Right cardiac atrium (tissue), 5 donors: ENCODE measurements at regions of chr12 and their contacts with region 1.

Region 1: DNA sequence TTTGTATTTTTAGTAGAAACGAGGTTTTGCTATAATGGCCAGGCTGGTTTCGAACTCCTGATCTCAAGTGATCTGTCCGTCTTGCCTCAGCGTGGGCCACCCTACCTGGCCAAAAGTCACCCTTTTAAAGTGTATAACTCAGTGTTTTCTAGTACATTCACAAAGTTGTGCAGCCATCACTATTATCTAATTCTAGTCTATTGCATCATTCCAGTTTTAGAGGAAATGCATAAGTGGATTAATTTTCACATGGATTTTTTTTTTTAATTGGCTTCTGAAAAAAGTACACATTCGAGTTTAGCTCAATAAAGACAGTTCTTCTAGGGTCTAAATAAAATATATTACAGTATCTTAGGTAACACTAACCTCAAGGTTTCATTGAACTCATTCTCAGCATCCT is 3.7 kb downstream of the DEPDC4 start:
- DNase-seq: no peak
- ATAC-seq: no peak
- H3K4me3 ChIP-seq: no peak overlapping the region
- H3K27ac ChIP-seq: no peak overlapping the region
- H3K4me1 ChIP-seq: no peaks in the 10 kb centered on the region
- H3K27me3 ChIP-seq: no peaks in the 10 kb centered on the region

Region 2: DNA sequence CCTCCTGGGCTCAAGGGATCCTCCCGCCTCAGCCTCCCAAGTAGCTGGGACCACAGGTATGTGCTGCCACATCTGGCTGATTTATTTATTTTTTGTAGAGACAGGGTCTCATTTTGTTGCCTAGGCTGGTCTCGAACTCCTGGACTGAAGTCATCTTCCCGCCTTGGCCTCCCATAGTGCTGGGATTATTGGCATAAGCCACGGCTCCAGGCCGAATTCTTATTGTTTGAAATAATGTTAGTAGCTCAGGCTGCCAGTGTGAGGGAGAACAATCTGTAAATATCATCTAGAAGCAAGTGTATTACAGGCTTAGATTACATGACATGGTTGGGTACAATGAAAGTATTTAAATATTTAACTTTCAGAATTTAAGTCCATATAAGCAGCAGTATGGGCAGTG is 54.3 kb before region 1 on chr12:
- intact Hi-C with region 1: loop called in 1 of 4 experiments (anchors 5 kb)
- DNase-seq: no peak
- ATAC-seq: no peak
- H3K4me3 ChIP-seq: no peak overlapping the region
- H3K27ac ChIP-seq: no peak overlapping the region
- H3K4me1 ChIP-seq: no peaks in the 10 kb centered on the region
- H3K27me3 ChIP-seq: no peaks in the 10 kb centered on the region

Region 3: DNA sequence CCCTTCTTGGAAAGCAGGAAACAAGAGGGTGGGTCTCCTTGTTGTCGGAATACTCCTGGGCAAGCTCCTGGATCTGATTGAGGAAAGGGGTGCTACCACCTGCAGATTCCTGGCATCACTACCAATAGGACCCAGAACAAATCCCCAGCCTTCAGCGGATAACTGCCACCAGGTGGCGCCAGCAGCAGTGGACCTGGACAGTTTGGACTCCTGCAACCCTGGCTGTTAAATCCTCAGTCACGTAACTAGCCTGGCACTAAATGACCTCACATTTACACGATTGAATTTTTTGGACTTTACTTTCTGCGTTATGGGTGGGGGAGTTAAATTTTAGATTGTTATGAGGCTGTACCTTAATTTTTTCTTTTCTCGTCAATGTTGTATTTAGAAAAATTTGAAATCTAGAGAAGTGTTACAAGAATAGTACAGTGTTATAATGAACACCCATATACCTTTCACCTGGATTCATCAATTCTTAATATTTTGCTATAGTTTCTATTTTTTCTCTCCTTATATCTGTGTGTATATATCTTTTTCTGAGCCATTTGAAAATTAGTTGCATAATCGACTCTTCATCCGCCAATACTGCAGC is 405.9 kb after region 1 on chr12:
- intact Hi-C with region 1: no loop called
- DNase-seq: peak; percentile 66 to 86 (median 81)
- ATAC-seq: peak; percentile 66 to 75
- H3K4me3 ChIP-seq: no peak overlapping the region
- H3K27ac ChIP-seq: no peak overlapping the region
- H3K4me1 ChIP-seq: no peaks in the 10 kb centered on the region
- H3K27me3 ChIP-seq: no peaks in the 10 kb centered on the region